ENCODE measurements at regions of chr5 and their contacts with region 1.

Region 1: DNA sequence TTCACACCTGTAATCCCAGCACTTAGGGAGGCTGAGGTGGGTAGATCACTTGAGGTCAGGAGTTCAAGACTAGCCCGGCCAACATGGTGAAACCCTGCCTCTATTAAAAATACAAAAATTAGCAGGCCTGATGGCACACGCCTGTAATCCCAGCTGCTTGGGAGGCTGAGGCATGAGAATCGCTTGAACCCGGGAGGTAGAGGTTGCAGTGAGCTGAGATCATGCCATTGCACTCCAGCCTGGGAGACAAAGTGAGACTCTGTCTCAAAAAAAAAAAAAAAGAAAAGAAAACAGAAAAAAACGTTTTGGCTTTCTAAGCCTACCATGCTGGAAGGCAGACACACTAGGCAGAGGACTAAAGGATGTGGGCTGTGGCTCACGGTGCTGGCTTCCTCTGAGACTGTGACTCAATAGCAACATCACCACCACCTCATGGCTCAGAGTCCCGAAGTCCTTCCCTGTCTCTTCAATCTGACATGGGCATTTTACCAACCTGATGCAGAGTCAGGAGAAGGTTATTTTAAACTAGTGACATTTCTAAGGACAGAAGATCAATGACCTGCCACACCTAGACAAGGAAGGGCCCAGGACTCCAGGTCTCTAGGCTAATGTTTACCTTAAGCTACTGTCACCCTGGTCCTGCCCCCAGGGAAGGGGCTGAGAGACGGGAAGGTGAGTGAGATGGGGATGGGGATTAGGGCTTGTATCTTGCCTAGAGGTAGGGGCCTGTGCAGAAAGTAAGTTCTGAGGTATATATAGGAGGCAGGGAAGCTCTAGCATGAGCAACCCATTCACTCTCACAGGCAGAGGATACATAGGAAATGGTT is 3.8 kb downstream of the ECSCR start:
- DNase-seq: peak; percentile 82
- H3K4me3 ChIP-seq: peak overlapping the region in 1 of 3 experiments; percentile 97
- H3K27ac ChIP-seq: peak overlapping the region; percentile 99
- H3K4me1 ChIP-seq: peaks cover 41% of the 10 kb centered on the region
- H3K27me3 ChIP-seq: no peaks in the 10 kb centered on the region
- CTCF ChIP-seq: no peak
- POLR2A ChIP-seq: no peak

Region 2: DNA sequence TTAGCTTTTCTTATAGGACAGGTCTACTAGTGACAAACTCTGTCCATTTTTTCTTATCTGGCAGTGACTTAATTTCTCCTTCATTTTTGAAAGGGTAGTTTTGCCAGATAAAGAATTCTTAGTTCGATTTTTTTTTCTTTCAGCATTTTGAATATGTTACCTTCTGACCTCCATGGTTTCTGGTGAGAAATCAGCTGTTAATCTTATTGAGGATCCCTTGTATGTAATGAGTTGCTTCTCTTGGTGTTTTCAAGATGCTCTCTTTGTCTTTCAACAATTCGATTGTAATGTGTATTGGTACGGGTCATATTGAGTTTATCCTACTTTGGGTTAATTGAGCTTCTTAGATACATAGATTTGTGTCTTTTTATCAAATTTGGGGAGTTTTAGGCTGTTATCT is 104.6 kb before region 1 on chr5:
- CTCF ChIA-PET with region 1: no interaction called
- POLR2A ChIA-PET with region 1: no interaction called
- dilution Hi-C with region 1: no loop called
- intact Hi-C with region 1: no loop called
- DNase-seq: no peak
- H3K4me3 ChIP-seq: no peak overlapping the region
- H3K27ac ChIP-seq: no peak overlapping the region
- H3K4me1 ChIP-seq: no peaks in the 10 kb centered on the region
- H3K27me3 ChIP-seq: no peaks in the 10 kb centered on the region
- CTCF ChIP-seq: no peak
- POLR2A ChIP-seq: no peak

Region 3: GRCh38 chr5:139439013-139439903 is 19.5 kb before region 1 on chr5 and contains the start of gene DNAJC18:
- CTCF ChIA-PET with region 1: interaction called, 3 read pairs
- POLR2A ChIA-PET with region 1: interaction called, 9 read pairs
- dilution Hi-C with region 1: no loop called
- intact Hi-C with region 1: loop called (anchors 1 kb)
- DNase-seq: peak; percentile 88
- H3K4me3 ChIP-seq: peak within 1 kb of the TSS; percentile 42 to 66 (median 54)
- H3K27ac ChIP-seq: peak within 1 kb of the TSS; percentile 83
- H3K4me1 ChIP-seq: peaks cover 29% of the 10 kb centered on the region
- H3K27me3 ChIP-seq: no peaks in the 10 kb centered on the region
- CTCF ChIP-seq: no peak
- POLR2A ChIP-seq: peak; percentile 49
- total RNA-seq, gene DNAJC18: 51.1 and 52.6 TPM in 2 replicates

Region 4: DNA sequence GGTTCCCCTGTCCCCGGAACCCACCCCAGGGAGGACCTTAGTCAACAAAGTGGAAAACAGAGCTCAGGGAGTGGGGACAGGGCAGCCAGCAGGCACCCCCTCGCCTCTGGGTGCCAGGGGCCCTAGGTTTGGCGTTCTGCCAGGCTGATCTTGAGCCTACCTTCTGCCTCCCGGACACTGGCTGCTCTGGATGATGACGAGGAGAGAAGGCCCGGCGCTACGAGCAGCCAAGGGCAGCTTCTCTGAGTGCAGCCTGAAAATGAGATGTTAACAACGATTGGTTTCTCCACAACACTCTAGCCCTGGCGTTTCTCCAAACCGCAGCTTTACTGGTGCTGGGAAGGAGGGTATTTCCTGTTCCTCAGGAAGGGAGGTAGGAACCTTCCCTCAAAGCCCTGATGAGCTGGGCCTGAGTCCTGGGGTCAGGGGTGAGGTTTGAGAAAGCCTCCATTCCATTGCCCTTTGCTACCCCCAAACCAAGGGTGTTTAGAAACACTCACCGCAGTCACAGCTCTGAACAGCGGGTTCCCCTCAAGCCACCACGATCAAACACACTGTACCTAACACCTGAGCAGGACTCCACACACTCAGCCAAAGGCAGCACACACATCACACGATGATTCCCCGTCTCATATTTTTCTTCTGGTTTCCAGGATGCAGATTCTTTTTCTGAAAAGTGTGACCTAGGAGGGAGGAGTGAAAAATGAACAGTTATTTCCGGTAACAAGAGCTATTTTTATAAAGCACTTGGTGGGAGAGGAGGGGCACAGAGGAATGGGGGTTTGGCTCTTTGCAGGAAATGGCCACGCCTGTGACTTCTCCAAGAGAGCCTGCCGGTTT is 23.5 kb after region 1 on chr5 and contains the start of gene STING1:
- CTCF ChIA-PET with region 1: interaction called, 20 read pairs
- POLR2A ChIA-PET with region 1: interaction called, 21 read pairs
- dilution Hi-C with region 1: no loop called
- intact Hi-C with region 1: loop called (anchors 1 kb)
- DNase-seq: peak; percentile 90
- H3K4me3 ChIP-seq: peak within 1 kb of the TSS; percentile 4 to 67 (median 42)
- H3K27ac ChIP-seq: peak within 1 kb of the TSS; percentile 94
- H3K4me1 ChIP-seq: peaks cover 27% of the 10 kb centered on the region
- H3K27me3 ChIP-seq: no peaks in the 10 kb centered on the region
- CTCF ChIP-seq: no peak
- POLR2A ChIP-seq: peak; percentile 58
- total RNA-seq, gene STING1: 108 and 127 TPM in 2 replicates

Region 5: GRCh38 chr5:139517683-139518564 is 59.1 kb after region 1 on chr5:
- CTCF ChIA-PET with region 1: interaction called, 26 read pairs
- POLR2A ChIA-PET with region 1: interaction called, 7 read pairs
- dilution Hi-C with region 1: no loop called
- intact Hi-C with region 1: loop called (anchors 1 kb)
- DNase-seq: peak; percentile 90
- H3K4me3 ChIP-seq: peak overlapping the region in 2 of 3 experiments; percentile 7 to 32
- H3K27ac ChIP-seq: peak overlapping the region; percentile 26
- H3K4me1 ChIP-seq: peaks cover 7% of the 10 kb centered on the region
- H3K27me3 ChIP-seq: no peaks in the 10 kb centered on the region
- CTCF ChIP-seq: peak; percentile 98 to 99
- POLR2A ChIP-seq: peak; percentile 92